ENCODE measurements at regions of chr15 and their contacts with region 1.

Region 1: DNA sequence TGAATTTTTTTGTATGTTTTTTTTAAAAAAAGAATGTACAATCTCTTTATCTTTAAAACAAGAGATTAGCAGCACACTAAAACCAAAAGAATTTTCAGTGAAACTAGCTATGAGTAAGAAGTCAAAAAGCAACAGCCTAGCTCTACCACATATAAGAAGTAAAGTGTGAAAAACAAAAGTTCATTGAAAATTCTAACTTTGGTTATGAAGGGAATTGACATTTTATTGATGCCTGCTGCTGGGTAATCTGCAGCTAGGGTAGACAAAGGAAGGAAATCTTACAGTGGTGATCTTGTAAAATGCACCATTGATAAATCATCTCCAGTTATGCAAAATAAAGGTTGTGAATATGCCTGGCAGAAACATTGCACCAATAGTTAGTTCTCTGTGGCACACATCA is 37.8 kb upstream of the FOXB1 start:
- DNase-seq: no peak
- H3K4me3 ChIP-seq: no peak overlapping the region
- CTCF ChIP-seq: no peak

Region 2: DNA sequence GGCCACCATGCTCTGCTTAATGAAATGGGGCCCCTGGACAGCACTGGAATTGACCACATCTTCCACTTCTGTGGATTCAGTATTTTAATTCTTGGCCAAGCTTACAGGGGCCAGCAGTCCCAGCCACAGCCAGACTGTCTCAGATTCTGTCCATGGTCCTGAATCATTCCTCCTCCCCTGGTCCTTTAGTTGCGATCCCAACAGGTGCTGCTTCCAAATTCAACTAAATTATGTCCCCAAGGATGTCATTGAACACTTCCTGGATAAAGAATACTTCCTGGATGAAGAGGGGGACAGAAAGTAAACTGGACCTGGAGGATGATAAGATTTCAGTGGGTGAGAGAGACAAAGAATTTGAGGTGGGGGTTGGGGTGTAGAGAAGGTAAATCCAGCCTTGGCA is 73.3 kb before region 1 on chr15:
- in situ Hi-C with region 1: no loop called
- DNase-seq: peak; percentile 11
- H3K4me3 ChIP-seq: no peak overlapping the region
- CTCF ChIP-seq: no peak

Region 3: GRCh38 chr15:60026555-60026954 is 60.3 kb after region 1 on chr15:
- in situ Hi-C with region 1: loop called (anchors 5 kb)
- DNase-seq: no peak
- H3K4me3 ChIP-seq: no peak overlapping the region
- CTCF ChIP-seq: no peak

Measured in astrocyte of the cerebellum (primary cell).